Caco-2 (cell line): ENCODE measurements at regions of chr12 and their contacts with region 1.

Region 1: DNA sequence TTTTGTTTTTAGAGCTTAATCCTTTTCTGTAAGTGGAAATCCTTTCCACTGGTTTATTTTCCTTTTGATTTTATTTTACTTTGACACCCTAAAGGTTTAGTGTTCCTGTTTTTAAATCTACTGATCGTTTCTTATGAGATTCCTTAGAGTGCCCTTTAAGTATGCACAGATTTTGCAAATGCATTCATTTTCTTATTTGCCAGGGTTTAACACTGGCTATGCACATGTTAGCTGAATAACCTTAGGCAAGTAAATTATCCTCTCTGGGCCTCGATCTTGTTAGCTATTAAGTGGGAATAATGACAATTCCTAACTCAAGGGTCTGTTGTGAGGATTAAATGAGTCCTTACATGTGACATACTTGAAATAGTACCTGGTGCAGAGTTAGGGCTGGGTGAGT is 136.0 kb downstream of the BICD1 start:
- DNase-seq: no peak
- H3K4me3 ChIP-seq: no peak overlapping the region
- H3K4me3 Mint-ChIP-seq: no peak overlapping the region
- H3K27ac Mint-ChIP-seq: no peak overlapping the region
- H3K4me1 ChIP-seq: no peaks in the 10 kb centered on the region
- H3K4me1 Mint-ChIP-seq: no peaks in the 10 kb centered on the region
- H3K27me3 ChIP-seq: no peaks in the 10 kb centered on the region
- H3K27me3 Mint-ChIP-seq: no peaks in the 10 kb centered on the region
- CTCF ChIP-seq: no peak

Region 2: DNA sequence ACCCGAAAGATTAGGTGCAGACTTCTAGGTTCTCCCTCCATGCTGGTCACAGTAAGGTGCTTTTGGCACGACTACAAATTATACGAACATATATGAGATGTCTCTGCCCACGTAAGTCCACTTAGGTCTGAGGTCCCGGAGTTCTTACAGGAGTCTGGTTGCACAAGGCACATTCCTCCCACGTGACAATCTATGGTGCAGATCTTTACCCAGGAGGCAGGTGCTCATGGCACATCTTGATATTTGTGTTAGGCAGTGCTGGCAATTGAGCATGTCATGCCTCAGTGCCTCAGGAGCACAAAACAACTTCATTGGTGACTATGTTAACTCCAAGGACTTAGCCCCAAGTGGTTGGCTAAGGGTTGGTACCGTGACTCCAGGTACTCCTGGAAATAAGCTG is 421.8 kb before region 1 on chr12:
- CTCF ChIA-PET with region 1: no interaction called
- POLR2A ChIA-PET with region 1: interaction called, 10 read pairs
- intact Hi-C with region 1: no loop called
- DNase-seq: no peak
- H3K4me3 ChIP-seq: no peak overlapping the region
- H3K4me3 Mint-ChIP-seq: no peak overlapping the region
- H3K27ac Mint-ChIP-seq: no peak overlapping the region
- H3K4me1 ChIP-seq: peaks cover 2% of the 10 kb centered on the region
- H3K4me1 Mint-ChIP-seq: no peaks in the 10 kb centered on the region
- H3K27me3 ChIP-seq: no peaks in the 10 kb centered on the region
- H3K27me3 Mint-ChIP-seq: no peaks in the 10 kb centered on the region
- CTCF ChIP-seq: no peak